Activated naive CD4-positive, alpha-beta T cell treated with anti-CD3 and anti-CD28 coated beads for 36 hours (primary cell): ENCODE measurements at regions of chr2 and their contacts with region 1.

Region 1: GRCh38 chr2:179751163-179751809 is 110.1 kb downstream of the ZNF385B start:
- DNase-seq: no peak
- H3K4me3 Mint-ChIP-seq: no peak overlapping the region
- H3K27ac Mint-ChIP-seq: no peak overlapping the region
- H3K4me1 Mint-ChIP-seq: no peaks in the 10 kb centered on the region
- H3K27me3 Mint-ChIP-seq: no peaks in the 10 kb centered on the region

Region 2: DNA sequence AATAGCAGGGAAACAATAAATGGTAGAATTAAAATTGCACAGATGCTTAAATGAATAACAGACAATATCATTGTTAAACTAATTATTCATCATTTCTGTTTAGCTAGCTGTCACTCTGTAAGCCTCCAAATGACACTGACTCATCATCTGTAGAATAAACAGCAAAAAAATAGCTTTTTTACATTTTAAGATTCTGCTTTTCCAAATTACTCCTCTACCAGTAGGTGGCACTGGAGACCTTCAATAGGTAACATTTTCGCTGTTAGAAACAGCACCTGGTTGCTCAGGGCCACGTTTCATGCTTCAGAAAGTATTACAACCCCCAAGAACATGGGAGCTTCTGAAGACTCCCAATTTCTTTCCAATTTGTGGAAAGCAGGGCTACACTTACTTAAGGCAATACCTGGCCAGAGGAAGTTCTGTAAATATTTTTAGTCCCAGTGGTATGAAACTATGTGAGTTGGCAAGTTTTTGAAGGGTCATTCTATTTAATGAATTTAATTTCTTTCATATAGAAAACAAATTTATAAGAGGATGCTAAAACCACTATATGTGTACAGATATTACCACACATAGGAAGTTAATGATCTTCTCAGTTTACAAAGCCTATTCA is 989.4 kb before region 1 on chr2:
- CTCF ChIA-PET with region 1: no interaction called
- intact Hi-C with region 1: loop called (anchors 1 kb)
- DNase-seq: peak; percentile 51
- H3K4me3 Mint-ChIP-seq: no peak overlapping the region
- H3K27ac Mint-ChIP-seq: no peak overlapping the region
- H3K4me1 Mint-ChIP-seq: no peaks in the 10 kb centered on the region
- H3K27me3 Mint-ChIP-seq: no peaks in the 10 kb centered on the region

Region 3: DNA sequence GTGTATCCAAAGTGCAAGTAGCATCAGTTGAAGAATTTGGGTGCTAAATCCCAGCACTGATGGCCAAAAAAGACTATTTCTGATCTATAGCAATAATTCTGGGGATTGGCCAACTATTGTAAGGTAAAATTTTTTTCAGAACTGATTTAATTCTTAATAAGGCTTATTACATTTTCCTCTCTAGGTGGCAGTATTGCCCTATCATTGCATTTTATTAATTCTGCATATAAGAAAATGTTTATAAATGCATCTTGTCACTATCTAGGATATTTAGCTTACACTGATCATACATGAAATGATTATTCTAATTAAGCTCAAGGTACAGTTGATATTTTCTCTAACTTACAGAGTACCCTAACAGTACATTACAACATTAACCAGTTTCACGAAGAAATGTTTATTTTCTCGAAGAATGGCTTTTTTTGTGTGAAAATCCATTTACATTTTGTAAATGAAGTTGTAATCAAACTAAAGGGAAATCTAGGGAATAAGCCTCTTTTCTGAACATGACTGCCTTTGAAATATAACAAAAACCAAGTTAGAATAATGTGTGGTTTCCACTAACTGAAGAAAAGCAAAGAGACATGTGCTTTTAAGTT is 955.1 kb before region 1 on chr2:
- CTCF ChIA-PET with region 1: no interaction called
- intact Hi-C with region 1: loop called (anchors 1 kb)
- DNase-seq: no peak
- H3K4me3 Mint-ChIP-seq: no peak overlapping the region
- H3K27ac Mint-ChIP-seq: no peak overlapping the region
- H3K4me1 Mint-ChIP-seq: no peaks in the 10 kb centered on the region
- H3K27me3 Mint-ChIP-seq: no peaks in the 10 kb centered on the region

Region 4: GRCh38 chr2:178891265-178891958 is 859.9 kb before region 1 on chr2:
- CTCF ChIA-PET with region 1: interaction called, 3 read pairs
- intact Hi-C with region 1: loop called (anchors 2 kb)
- DNase-seq: peak; percentile 82
- H3K4me3 Mint-ChIP-seq: no peak overlapping the region
- H3K27ac Mint-ChIP-seq: no peak overlapping the region
- H3K4me1 Mint-ChIP-seq: peaks cover 9% of the 10 kb centered on the region
- H3K27me3 Mint-ChIP-seq: no peaks in the 10 kb centered on the region

Region 5: DNA sequence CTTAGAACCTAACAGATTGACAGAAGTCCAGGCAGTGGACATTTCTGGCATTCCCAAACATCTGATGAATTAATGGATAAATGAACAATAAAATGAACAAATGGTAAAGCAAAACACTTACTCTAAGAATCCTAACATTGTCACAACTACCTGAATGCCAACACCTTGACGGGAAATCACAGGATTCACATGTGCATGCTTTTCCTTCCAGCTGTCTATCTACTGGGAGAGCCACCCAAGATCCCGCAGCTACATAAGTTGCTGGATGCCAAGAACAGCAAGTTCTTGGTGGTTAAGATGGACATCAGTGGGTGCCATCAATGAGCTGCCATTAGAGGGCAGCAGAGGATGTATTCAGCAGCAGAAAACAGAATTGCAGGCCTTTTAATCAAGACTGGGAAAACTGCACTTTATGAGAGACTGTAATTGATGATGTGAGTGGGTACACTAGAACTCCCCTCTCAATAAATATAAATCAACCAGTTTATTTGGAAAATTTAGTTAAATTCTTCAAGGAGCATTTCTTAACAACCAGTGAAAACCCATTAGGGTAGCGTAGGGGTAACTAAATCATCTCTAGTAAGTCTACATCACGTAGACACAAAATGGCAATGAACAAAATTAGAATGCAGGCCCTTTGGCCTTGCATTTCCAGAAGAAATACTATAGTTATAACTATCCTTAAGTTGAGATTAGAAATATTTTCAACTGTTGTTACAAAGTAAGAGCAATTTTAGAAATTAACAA is 532.3 kb before region 1 on chr2:
- CTCF ChIA-PET with region 1: no interaction called
- intact Hi-C with region 1: loop called (anchors 1 kb)
- DNase-seq: peak; percentile 70
- H3K4me3 Mint-ChIP-seq: no peak overlapping the region
- H3K27ac Mint-ChIP-seq: no peak overlapping the region
- H3K4me1 Mint-ChIP-seq: no peaks in the 10 kb centered on the region
- H3K27me3 Mint-ChIP-seq: no peaks in the 10 kb centered on the region

Region 6: GRCh38 chr2:179410552-179411356 is 340.5 kb before region 1 on chr2:
- CTCF ChIA-PET with region 1: no interaction called
- intact Hi-C with region 1: loop called (anchors 1 kb)
- DNase-seq: peak; percentile 45
- H3K4me3 Mint-ChIP-seq: no peak overlapping the region
- H3K27ac Mint-ChIP-seq: no peak overlapping the region
- H3K4me1 Mint-ChIP-seq: no peaks in the 10 kb centered on the region
- H3K27me3 Mint-ChIP-seq: peaks cover 32% of the 10 kb centered on the region

Region 7: GRCh38 chr2:179422037-179422643 is 329.1 kb before region 1 on chr2:
- CTCF ChIA-PET with region 1: interaction called, 3 read pairs
- intact Hi-C with region 1: loop called (anchors 1 kb)
- DNase-seq: peak; percentile 72
- H3K4me3 Mint-ChIP-seq: no peak overlapping the region
- H3K27ac Mint-ChIP-seq: no peak overlapping the region
- H3K4me1 Mint-ChIP-seq: no peaks in the 10 kb centered on the region
- H3K27me3 Mint-ChIP-seq: peaks cover 8% of the 10 kb centered on the region